H1 (cell line): ENCODE measurements at regions of chr11 and their contacts with region 1.

Region 1: DNA sequence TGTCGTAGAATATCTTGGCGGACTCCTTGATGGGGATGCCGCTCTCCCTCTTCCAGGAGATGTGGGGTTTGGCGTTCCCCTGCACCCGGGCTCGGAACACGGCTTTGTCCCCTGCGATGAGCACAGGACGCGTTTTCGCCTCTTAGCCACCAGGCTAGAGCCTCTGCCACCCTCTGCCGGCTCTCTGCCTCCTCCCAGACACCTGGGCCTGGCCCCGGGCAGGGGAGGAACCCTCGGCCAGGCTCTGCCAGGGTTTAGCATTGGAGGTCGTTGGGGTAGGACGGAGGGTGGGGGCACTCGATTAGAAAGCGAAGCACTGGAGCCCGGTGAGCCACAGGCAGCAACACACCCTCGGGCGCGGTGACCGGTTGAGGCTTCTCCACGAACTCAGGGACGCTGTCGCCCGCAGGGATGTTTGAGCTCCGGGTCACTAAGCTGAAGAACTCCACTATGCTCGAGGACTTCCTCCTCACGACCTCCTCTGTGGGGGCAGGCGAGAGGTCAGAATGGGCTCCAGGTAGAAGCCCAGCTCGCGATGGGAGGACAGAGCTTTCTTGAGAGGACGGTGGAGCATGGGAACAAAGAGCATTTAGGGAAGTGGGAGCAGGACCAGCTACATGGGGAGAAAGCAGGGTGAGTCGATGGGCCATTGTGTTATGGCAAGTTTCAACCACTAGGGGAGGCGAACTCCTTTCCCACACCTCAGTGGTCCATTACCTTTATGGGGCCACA is 4.3 kb downstream of the IGSF22 start:
- DNase-seq: peak in 1 of 2 experiments; percentile 85
- H3K4me3 ChIP-seq: peak overlapping the region; percentile 48 to 86 (median 80)
- H3K27ac ChIP-seq: no peak overlapping the region
- H3K4me1 ChIP-seq: peaks cover 0 to 15% (median 10%) of the 10 kb centered on the region in 4 experiments; a peak in 5 of 7 replicates
- H3K27me3 ChIP-seq: peaks cover 0 to 9% (median 3%) of the 10 kb centered on the region in 4 experiments; a peak in 2 of 7 replicates
- CTCF ChIP-seq: peak; percentile 68 to 89 (median 84)
- EP300 ChIP-seq: no peak
- POLR2A ChIP-seq: no peak
- RAD21 ChIP-seq: peak; percentile 51 to 55

Region 2: DNA sequence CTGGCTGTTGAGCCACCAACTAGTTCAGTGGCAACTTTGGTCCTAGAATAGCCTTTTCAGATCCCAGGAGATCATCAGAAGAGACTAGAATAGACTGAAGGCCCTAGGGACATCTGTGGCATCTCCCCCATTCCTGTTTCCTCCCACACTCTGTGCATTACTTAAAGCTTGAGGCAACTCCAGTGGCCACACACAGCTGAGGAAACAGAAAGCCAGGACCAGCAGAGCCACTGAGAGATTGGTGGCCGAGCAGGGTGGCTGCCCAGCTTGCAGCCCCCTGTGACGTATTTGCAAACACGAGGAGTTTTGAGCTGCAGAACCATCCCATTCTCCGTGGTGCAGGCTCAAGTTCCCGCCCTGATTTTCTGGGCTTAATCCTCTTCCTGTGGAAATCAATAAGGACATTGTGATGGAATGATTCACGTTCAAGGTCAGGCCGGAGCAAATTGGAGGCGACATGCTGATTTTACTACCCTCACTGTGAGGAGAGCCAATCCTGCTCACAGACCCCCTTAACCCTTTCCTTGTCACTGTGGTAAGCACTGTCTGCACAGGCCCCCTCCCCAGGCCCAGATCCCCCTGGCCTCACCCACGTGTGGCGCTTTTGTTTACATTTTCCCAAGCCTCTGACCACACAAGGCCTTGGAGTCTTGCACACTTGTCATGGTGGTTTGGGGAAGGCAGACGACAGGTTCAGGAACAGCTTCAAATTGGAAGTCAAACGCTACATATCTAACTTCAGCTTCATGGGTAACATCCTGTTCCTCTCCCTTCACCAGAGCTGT is 1071.4 kb before region 1 on chr11:
- CTCF ChIA-PET with region 1: no interaction called
- POLR2A ChIA-PET with region 1: no interaction called
- DNase-seq: no peak
- H3K4me3 ChIP-seq: no peak overlapping the region
- H3K27ac ChIP-seq: no peak overlapping the region
- H3K4me1 ChIP-seq: peaks cover 3 to 9% (median 7%) of the 10 kb centered on the region in 4 experiments; a peak in 6 of 7 replicates
- H3K27me3 ChIP-seq: peaks cover 0 to 9% (median 3%) of the 10 kb centered on the region in 4 experiments; a peak in 3 of 7 replicates
- CTCF ChIP-seq: no peak
- EP300 ChIP-seq: no peak
- POLR2A ChIP-seq: no peak
- RAD21 ChIP-seq: no peak

Region 3: DNA sequence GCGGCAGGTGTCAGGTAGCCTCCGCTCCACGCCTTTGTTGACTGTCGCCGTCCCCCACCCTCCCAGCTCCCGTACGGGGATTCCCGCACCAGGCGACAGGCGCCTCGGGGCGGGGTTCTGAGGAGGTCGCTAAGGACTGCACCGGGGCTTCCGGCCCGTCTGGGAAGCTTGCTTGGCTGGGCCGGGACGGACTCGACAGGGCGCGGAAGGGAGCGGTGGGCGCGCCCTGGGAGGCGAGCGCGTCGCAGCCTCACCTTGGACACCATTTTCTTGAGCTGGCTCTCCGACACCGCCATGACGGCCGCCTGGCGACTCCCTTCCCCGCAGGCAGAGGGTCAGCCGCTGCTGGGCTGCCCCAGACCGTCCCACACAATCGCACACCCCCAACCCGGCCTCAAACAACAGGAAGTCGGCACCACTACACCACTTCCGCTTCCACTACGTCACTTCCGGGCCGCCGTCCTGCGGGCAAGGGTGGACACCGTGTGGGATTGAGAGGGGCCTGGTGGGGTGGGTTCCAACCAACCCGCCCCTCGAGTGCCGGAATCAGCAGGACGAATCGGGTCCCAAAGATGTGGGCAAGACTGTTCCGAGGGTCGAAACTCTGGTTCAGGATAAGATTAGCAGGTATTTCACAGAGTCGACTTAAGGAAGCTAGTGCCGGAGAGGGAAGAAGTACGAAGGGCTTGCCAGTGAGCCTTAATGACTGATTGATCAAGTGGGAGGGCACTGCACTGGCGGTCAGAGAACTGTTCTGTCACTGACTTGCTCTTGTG is 195.0 kb before region 1 on chr11 and contains the start of gene TSG101:
- CTCF ChIA-PET with region 1: interaction called, 3 read pairs
- POLR2A ChIA-PET with region 1: interaction called, 10 read pairs
- DNase-seq: peak; percentile 69 to 96
- H3K4me3 ChIP-seq: peak within 1 kb of the TSS; percentile 86 to 96 (median 91)
- H3K27ac ChIP-seq: peak within 1 kb of the TSS; percentile 97
- H3K4me1 ChIP-seq: peaks cover 0 to 3% (median 0%) of the 10 kb centered on the region in 4 experiments; a peak in 2 of 7 replicates
- H3K27me3 ChIP-seq: no peaks in the 10 kb centered on the region
- CTCF ChIP-seq: no peak
- EP300 ChIP-seq: 0 out of 3 replicates have a peak, but pooled peaks of 1 of the 2 experiments have one; percentile 4
- POLR2A ChIP-seq: peak; percentile 81 to 94
- RAD21 ChIP-seq: no peak
- total RNA-seq, gene TSG101: 50.8 and 58.2 TPM in 2 replicates

Region 4: GRCh38 chr11:18650859-18651557 is 70.7 kb before region 1 on chr11:
- CTCF ChIA-PET with region 1: interaction called, 21 read pairs
- POLR2A ChIA-PET with region 1: no interaction called
- DNase-seq: peak; percentile 31 to 66
- H3K4me3 ChIP-seq: peak overlapping the region in 1 of 4 experiments; percentile 12; a peak in 1 of 8 replicates
- H3K27ac ChIP-seq: no peak overlapping the region
- H3K4me1 ChIP-seq: no peaks in the 10 kb centered on the region
- H3K27me3 ChIP-seq: no peaks in the 10 kb centered on the region
- CTCF ChIP-seq: peak; percentile 37 to 92 (median 77)
- EP300 ChIP-seq: no peak
- POLR2A ChIP-seq: 0 out of 3 replicates have a peak, but pooled peaks of 1 of the 2 experiments have one; percentile 30
- RAD21 ChIP-seq: peak; percentile 84 to 87

Region 5: DNA sequence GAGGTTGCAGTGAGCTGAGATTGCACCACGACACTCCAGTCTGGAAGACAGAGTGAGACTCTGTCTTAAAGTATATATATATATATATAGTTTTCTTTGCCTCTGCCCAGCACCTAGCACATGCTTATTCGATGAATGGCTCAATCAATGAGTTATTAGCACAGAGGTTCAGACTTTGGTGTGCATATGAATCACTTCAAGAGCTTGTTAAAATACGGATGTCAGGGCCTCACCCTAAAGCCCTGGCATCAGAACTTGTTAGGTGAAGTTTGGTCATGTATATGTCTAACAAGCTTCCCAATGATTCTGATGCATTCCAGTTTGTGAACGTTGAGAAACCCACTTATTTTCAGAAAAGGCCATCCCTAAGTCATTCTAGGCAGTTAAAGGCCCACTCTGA is 44.9 kb before region 1 on chr11:
- CTCF ChIA-PET with region 1: interaction called, 10 read pairs
- POLR2A ChIA-PET with region 1: no interaction called
- DNase-seq: no peak
- H3K4me3 ChIP-seq: no peak overlapping the region
- H3K27ac ChIP-seq: no peak overlapping the region
- H3K4me1 ChIP-seq: no peaks in the 10 kb centered on the region
- H3K27me3 ChIP-seq: peaks cover 0 to 1% (median 0%) of the 10 kb centered on the region in 4 experiments; a peak in 1 of 7 replicates
- CTCF ChIP-seq: no peak
- EP300 ChIP-seq: no peak
- POLR2A ChIP-seq: no peak
- RAD21 ChIP-seq: no peak

Region 6: GRCh38 chr11:18706330-18707243 is 15.1 kb before region 1 on chr11:
- CTCF ChIA-PET with region 1: interaction called, 14 read pairs
- POLR2A ChIA-PET with region 1: interaction called, 6 read pairs
- DNase-seq: no peak
- H3K4me3 ChIP-seq: peak overlapping the region in 3 of 4 experiments; percentile 32 to 55 (median 35); a peak in 7 of 8 replicates
- H3K27ac ChIP-seq: no peak overlapping the region
- H3K4me1 ChIP-seq: no peaks in the 10 kb centered on the region
- H3K27me3 ChIP-seq: peaks cover 0 to 2% (median 0%) of the 10 kb centered on the region in 4 experiments; a peak in 3 of 7 replicates
- CTCF ChIP-seq: no peak
- EP300 ChIP-seq: no peak
- POLR2A ChIP-seq: no peak
- RAD21 ChIP-seq: no peak

Region 7: DNA sequence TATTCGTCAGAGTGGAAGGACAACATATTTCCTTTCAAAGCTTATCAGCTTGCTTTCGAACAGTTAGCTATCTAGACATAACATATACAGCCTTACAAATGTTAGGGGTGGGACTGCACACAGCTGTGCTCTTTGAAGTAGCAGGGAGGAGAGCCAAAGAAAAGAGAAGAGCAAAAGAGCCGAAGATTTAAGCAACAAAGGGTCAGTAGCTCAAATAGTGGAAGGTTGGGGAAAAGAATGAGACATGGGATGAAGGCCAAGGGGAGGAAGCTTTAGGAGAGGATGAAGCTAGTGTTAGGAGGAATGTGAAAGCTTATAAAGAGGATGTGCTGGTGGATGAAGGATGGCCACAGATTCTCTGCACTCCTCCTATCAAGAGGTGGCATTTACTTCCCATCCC is 36.1 kb after region 1 on chr11:
- CTCF ChIA-PET with region 1: interaction called, 71 read pairs
- POLR2A ChIA-PET with region 1: no interaction called
- DNase-seq: no peak
- H3K4me3 ChIP-seq: no peak overlapping the region
- H3K27ac ChIP-seq: no peak overlapping the region
- H3K4me1 ChIP-seq: no peaks in the 10 kb centered on the region
- H3K27me3 ChIP-seq: no peaks in the 10 kb centered on the region
- CTCF ChIP-seq: no peak
- EP300 ChIP-seq: no peak
- POLR2A ChIP-seq: no peak
- RAD21 ChIP-seq: no peak